Activated CD8-positive, alpha-beta T cell treated with anti-CD3 and anti-CD28 coated beads, Interleukin-2, amount 10 ng/mL, durations not matched to agents 7 days and 5 days (primary cell): ENCODE measurements at regions of chr12 and their contacts with region 1.

Region 1: DNA sequence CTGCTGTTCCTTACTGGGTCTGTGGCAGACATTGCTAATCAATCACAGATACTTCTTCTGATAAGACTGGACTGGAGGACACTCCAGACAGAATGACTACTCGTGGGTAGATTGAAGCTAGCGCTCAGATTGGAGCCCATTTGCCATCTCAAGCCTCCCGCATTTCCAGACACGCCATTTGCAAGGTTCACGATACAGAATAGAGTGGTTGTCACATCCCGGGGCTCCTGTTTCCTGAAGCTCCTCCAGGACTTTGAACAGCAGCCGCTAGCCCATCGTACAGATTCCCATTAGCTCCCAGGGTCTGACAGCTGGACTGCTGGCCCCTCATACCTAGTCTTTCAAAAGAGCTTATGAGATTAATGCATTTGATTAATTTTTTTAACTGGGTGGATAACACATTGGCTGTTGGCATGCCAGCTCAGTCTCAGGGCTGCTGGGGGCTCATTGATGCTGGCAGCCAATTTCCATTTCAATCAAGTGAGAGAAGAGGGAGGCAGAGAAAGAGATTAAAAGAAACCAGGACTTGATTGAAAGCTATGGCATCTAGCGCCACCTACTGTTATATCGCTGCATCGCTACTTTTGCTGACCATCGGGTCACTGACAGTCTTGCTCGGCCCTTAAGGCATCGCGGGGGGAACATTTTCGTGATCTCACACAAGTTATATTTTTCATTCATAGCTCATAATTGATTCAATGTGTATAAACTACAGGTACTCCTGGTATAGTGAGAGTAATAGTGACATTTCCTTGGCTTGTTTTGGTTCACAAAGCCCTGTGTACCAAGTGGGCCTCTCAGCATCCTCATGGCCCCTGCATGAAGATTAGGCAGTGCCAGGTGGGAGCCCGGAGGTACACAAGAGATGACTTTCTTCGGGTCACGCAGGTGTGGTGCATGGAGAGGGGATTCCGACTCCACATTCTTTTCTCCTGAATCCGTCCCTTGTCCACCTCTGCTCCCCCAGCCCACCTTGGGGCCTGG is 78.6 kb downstream of the CCDC60 start:
- DNase-seq: peak; percentile 58
- ATAC-seq: no peak
- H3K4me3 Mint-ChIP-seq: no peak overlapping the region
- H3K27ac Mint-ChIP-seq: no peak overlapping the region
- H3K4me1 Mint-ChIP-seq: peaks cover 2% of the 10 kb centered on the region
- H3K27me3 Mint-ChIP-seq: peaks cover 3% of the 10 kb centered on the region

Region 2: DNA sequence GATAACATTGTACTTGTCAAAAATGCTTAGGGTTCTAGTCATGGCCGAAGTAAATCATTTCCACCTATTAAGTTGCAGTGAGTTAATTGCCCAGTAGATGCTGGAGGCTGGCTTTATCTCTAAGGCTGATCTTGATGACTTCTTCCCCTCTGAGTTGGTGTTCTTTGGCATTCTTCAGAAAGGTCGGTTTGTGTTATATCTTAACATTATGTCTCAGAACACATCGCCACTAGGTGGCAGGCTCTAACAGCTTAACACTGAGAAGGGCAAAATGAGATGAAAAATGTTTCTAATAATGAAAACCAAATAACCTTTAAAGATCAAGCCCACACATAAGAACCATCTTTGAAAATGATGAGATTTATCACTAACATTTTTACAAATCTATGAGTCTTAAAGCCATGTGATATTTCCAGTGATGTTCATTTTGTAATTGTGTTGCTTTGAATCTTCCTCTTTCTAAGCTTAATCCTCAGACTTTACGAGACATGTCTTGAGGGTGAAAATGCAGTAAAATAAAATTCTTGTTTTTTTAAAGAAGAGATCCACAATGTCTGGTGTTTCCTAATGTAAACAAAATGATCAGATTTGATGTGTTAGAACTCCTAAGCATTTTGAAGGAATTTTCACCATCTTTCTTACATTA is 1008.1 kb before region 1 on chr12:
- CTCF ChIA-PET with region 1: interaction called, 10 read pairs
- POLR2A ChIA-PET with region 1: no interaction called
- DNase-seq: peak; percentile 73
- ATAC-seq: peak; percentile 65
- H3K4me3 Mint-ChIP-seq: no peak overlapping the region
- H3K27ac Mint-ChIP-seq: no peak overlapping the region
- H3K4me1 Mint-ChIP-seq: no peaks in the 10 kb centered on the region
- H3K27me3 Mint-ChIP-seq: no peaks in the 10 kb centered on the region

Region 3: GRCh38 chr12:119183942-119184695 is 229.0 kb before region 1 on chr12:
- CTCF ChIA-PET with region 1: no interaction called
- POLR2A ChIA-PET with region 1: no interaction called
- DNase-seq: no peak
- ATAC-seq: no peak
- H3K4me3 Mint-ChIP-seq: no peak overlapping the region
- H3K27ac Mint-ChIP-seq: no peak overlapping the region
- H3K4me1 Mint-ChIP-seq: no peaks in the 10 kb centered on the region
- H3K27me3 Mint-ChIP-seq: no peaks in the 10 kb centered on the region

Region 4: DNA sequence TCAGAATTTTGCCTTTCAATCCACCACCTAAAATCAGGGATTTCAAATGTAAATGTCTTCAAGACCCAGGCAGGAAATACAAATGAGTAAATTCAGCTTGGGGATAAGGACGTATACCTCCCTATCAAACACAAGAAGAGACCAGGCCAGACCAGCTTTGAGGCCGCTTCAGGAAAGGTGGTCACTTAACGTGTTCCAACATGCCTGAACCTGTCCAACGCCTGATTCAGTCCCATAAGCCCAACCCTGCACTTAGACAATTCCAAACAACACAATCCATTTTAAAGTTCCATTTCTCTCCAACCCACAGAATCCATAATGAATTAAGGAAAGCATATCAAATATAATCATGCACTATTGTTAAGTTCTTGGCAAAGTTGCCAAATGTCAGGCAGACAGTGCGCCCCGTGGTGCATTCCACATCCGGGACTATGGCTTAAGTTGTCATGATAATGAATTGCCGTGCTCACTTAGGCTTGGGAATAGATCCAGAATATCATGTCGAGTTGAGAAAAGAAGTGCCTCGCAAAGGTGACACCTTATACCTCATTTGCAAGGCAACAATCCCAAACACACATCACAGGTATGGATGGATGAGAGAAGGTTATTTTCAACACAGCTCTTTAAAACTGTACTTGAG is 43.1 kb before region 1 on chr12:
- CTCF ChIA-PET with region 1: no interaction called
- POLR2A ChIA-PET with region 1: no interaction called
- DNase-seq: no peak
- ATAC-seq: no peak
- H3K4me3 Mint-ChIP-seq: no peak overlapping the region
- H3K27ac Mint-ChIP-seq: no peak overlapping the region
- H3K4me1 Mint-ChIP-seq: peaks cover 6% of the 10 kb centered on the region
- H3K27me3 Mint-ChIP-seq: no peaks in the 10 kb centered on the region

Region 5: DNA sequence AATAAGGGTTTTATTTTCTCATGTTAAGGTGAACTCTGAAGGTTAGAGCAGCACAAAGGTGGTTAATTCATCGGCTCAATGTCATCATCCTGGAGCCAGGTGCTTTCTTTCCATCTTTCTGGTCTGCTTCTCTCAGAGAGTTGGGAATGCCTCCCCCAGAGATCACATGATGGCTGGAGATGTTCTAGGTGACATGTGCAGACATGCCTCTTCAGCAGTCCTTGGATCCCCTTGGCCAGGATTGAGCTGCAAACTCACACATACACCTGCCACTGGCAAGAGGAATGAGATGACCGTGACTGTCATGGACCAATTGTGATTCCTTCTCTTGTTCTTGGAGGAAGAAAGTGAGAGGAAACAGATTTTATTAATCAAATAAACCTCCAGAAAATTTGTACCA is 25.1 kb before region 1 on chr12:
- CTCF ChIA-PET with region 1: no interaction called
- POLR2A ChIA-PET with region 1: no interaction called
- DNase-seq: no peak
- ATAC-seq: no peak
- H3K4me3 Mint-ChIP-seq: no peak overlapping the region
- H3K27ac Mint-ChIP-seq: no peak overlapping the region
- H3K4me1 Mint-ChIP-seq: no peaks in the 10 kb centered on the region
- H3K27me3 Mint-ChIP-seq: peaks cover 13% of the 10 kb centered on the region